Sigmoid colon (tissue), 7 donors: ENCODE measurements at regions of chr10 and their contacts with region 1.

Region 1: DNA sequence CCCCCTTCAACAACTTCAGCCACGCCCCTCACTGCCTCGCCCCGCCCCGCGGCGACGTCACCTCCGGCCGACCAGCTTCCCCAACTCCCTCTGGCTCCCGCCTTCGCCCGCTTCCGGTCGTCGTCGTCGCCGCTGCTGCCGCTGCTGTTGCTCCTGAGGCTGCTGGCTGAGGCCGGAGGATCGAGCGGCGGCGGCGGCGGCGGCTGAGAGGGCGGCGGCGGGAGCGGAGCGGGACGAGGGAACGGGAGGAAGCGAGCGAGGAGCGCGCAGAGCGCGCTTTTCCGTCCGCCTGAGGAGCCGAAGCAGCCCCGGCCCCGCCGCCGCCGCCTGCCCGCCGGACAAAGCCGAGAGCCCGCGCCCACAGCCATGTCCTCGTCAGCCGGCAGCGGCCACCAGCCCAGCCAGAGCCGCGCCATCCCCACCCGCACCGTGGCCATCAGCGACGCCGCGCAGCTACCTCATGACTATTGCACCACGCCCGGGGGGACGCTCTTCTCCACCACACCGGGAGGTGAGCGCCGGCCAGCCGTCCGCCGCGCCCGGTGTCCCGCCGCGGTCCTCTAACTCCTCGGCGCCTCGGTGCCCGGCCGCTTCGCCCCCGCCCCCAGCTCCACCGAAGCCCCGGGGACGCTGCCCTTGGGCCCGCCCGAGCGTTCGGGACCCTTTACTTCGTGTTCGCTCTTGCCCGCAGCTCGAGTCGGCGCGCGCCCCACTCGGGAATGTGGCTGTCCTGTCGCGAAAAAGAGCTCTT is at the start of gene EIF4EBP2:
- DNase-seq: peak; percentile 99
- H3K4me3 ChIP-seq: peak within 1 kb of the TSS; percentile 88 to 92 (median 88)
- H3K27ac ChIP-seq: peak within 1 kb of the TSS; percentile 99 to 100 (median 100)
- H3K4me1 ChIP-seq: peaks cover 0 to 38% (median 29%) of the 10 kb centered on the region in 4 donors
- H3K27me3 ChIP-seq: no peaks in the 10 kb centered on the region
- CTCF ChIP-seq: no peak
- EP300 ChIP-seq: peak in 1 of 4 donors; percentile 9
- POLR2A ChIP-seq: peak; percentile 95 to 97
- total RNA-seq, gene EIF4EBP2: 67.1 to 76.0 (median 72.6) TPM

Region 2: GRCh38 chr10:70381471-70382421 is 22.5 kb before region 1 on chr10:
- intact Hi-C with region 1: loop called (anchors 2 kb)
- DNase-seq: peak; percentile 81
- H3K4me3 ChIP-seq: peak overlapping the region; percentile 62 to 92 (median 84)
- H3K27ac ChIP-seq: peak overlapping the region; percentile 84 to 90 (median 88)
- H3K4me1 ChIP-seq: peaks cover 0 to 37% (median 34%) of the 10 kb centered on the region in 4 donors
- H3K27me3 ChIP-seq: no peaks in the 10 kb centered on the region
- CTCF ChIP-seq: no peak
- EP300 ChIP-seq: no peak
- POLR2A ChIP-seq: no peak